H1 (cell line): ENCODE measurements at regions of chr1 and their contacts with region 1.

Region 1: DNA sequence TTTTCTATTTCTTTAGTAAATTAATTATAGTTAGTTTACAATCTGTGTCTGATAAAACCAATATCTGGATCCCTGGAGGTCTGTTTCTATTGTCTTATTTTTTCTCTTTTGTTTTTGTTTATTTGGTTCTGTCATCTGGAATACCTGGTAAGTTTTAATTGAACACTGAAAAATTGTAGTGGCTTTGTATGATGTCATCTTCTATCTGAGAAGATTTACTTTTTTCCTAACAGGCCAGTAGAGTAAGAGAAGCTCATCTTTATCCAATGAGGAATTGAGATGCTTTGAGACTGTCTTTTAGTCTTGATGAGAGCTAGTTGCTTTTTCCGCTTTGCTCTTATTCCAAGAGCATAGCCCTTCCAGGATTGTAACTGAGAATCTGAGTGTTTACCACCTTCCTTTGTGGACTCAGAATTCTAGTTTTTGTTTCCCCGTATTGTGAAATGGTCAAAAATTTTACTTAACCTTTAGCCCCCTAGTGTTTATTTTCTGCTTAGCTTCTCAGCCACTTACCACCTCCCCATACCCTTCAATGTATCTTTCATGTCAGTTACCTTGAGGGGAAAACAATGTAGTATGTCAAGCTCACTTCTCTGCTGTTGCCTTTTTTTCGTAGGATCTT is 25.0 kb downstream of the PTGFRN start:
- DNase-seq: no peak
- H3K4me3 ChIP-seq: no peak overlapping the region
- H3K27ac ChIP-seq: no peak overlapping the region
- H3K4me1 ChIP-seq: no peaks in the 10 kb centered on the region; a peak in 2 of 7 replicates
- H3K27me3 ChIP-seq: no peaks in the 10 kb centered on the region
- CTCF ChIP-seq: peak in 1 of 3 experiments; percentile 48; a peak in 2 of 4 replicates
- EP300 ChIP-seq: no peak
- POLR2A ChIP-seq: no peak
- RAD21 ChIP-seq: peak; percentile 22 to 28; a peak in 2 of 4 replicates

Region 2: DNA sequence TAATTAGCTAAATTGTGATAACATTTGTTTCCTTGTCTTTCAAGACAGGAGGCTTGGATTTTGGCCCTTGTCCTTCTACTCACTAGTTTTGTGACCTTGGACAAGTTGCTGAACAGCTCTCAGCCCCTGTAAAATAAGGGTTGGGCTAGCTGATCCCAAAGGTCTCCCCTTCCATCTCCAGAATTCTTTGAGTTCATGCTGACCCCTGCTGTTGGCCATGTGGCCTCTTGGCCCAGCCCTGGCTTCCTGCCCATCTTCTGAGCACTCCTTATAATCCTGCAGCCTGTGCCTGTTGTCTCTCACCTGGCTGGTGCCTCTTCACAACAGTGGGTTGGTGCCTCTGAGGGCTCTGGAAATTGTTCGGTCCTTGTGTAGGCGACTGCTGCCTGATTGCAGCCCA is 14.9 kb before region 1 on chr1:
- CTCF ChIA-PET with region 1: interaction called, 25 read pairs
- POLR2A ChIA-PET with region 1: interaction called, 3 read pairs
- DNase-seq: no peak
- H3K4me3 ChIP-seq: no peak overlapping the region
- H3K27ac ChIP-seq: 0 out of 2 replicates have a peak overlapping the region, but pooled peaks have one; percentile 7
- H3K4me1 ChIP-seq: peaks cover 0 to 4% (median 0%) of the 10 kb centered on the region in 4 experiments; a peak in 2 of 7 replicates
- H3K27me3 ChIP-seq: no peaks in the 10 kb centered on the region
- CTCF ChIP-seq: no peak
- EP300 ChIP-seq: no peak
- POLR2A ChIP-seq: no peak
- RAD21 ChIP-seq: peak; percentile 19 to 38; a peak in 3 of 4 replicates